Activated T-helper 2 cell treated with anti-CD3 and anti-CD28 coated beads, Interferon-gamma antibody, Interleukin-2, Interleukin-4, amounts not matched to agents 10 μg/mL and 5 μg/mL and 100 μg/mL, durations not matched to agents 14 hours and 24 hours and 36 hours (primary cell): ENCODE measurements at regions of chr12 and their contacts with region 1.

Region 1: DNA sequence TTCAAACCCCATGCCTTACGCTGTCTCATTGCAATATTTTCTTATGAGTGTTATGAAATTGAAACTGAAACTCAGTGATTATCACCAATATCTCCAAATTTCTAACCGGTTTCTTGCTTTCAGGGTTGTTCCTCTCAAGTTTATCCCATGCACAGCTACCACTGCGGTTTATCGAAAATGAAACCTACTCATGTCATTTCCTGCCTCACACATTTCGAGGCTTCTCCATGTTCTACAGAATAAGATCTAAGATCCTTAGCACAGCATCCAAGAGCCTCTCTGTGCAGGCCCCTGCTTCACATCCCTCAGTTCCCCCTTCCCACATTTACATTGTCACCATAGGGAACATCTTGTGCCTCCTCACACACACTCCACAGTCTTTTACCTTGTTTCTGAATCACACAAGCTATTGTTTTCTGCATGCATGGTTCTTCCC is 45.5 kb upstream of the FAR2 start:
- DNase-seq: peak; percentile 65
- H3K4me3 Mint-ChIP-seq: peak overlapping the region; percentile 7
- H3K27ac Mint-ChIP-seq: peak overlapping the region; percentile 60
- H3K4me1 Mint-ChIP-seq: peaks cover 29% of the 10 kb centered on the region
- H3K27me3 Mint-ChIP-seq: peaks cover 10% of the 10 kb centered on the region

Region 2: GRCh38 chr12:28535216-28535615 is 568.3 kb before region 1 on chr12:
- intact Hi-C with region 1: loop called (anchors 5 kb)
- DNase-seq: no peak
- H3K4me3 Mint-ChIP-seq: no peak overlapping the region
- H3K27ac Mint-ChIP-seq: no peak overlapping the region
- H3K4me1 Mint-ChIP-seq: peaks cover 10% of the 10 kb centered on the region
- H3K27me3 Mint-ChIP-seq: no peaks in the 10 kb centered on the region

Region 3: GRCh38 chr12:29082522-29082921 is 21.0 kb before region 1 on chr12:
- intact Hi-C with region 1: loop called (anchors 1 kb)
- DNase-seq: no peak
- H3K4me3 Mint-ChIP-seq: no peak overlapping the region
- H3K27ac Mint-ChIP-seq: no peak overlapping the region
- H3K4me1 Mint-ChIP-seq: peaks cover 5% of the 10 kb centered on the region
- H3K27me3 Mint-ChIP-seq: peaks cover 44% of the 10 kb centered on the region

Region 4: DNA sequence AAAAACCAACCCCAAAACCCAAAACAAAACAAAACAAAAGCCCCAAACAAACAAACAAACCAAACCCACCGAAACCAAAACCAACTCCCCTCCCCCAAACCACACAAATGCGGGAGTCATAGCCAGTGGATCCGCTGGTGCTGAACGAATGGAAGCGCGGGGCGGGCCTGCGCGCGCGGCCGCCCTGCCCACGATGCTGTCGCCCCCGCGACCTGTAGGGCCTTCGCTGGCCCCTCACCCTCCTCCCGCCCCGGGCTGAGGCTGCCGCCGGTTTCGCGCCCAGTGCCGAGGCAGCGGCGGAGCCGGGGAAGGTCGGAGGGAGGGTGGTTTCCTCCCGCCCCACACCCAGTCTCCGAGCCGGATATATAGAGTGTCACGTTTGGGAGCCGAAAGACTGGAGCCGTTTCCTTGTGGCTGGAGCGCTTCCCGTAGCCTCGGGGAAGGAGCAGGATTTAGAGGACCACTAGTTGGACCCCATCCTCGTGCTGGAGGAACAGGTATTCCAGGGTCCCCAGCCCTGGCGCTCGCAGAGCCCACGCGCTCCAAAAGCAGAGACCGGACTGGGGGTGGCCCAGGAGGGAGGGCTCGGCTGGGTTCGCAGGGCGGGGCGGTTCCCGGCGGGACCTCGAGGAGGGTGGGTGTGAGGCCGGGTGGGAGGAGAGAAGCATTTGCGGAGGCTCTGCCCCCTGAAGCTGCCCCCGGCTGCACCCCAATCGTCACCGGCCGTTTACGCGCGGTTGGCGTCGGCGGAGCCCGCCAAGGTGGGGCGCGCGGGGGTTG is 45.5 kb after region 1 on chr12 and contains the start of gene FAR2:
- intact Hi-C with region 1: loop called (anchors 1 kb)
- DNase-seq: peak; percentile 33
- H3K4me3 Mint-ChIP-seq: peak within 1 kb of the TSS; percentile 83
- H3K27ac Mint-ChIP-seq: peak within 1 kb of the TSS; percentile 64
- H3K4me1 Mint-ChIP-seq: peaks cover 20% of the 10 kb centered on the region
- H3K27me3 Mint-ChIP-seq: peaks cover 68% of the 10 kb centered on the region
- total RNA-seq, gene FAR2: 3.8 and 4.3 TPM in 2 replicates

Region 5: GRCh38 chr12:29241821-29242591 is 138.4 kb after region 1 on chr12:
- intact Hi-C with region 1: loop called (anchors 5 kb)
- DNase-seq: no peak
- H3K4me3 Mint-ChIP-seq: no peak overlapping the region
- H3K27ac Mint-ChIP-seq: no peak overlapping the region
- H3K4me1 Mint-ChIP-seq: peaks cover 19% of the 10 kb centered on the region
- H3K27me3 Mint-ChIP-seq: peaks cover 2% of the 10 kb centered on the region

Region 6: DNA sequence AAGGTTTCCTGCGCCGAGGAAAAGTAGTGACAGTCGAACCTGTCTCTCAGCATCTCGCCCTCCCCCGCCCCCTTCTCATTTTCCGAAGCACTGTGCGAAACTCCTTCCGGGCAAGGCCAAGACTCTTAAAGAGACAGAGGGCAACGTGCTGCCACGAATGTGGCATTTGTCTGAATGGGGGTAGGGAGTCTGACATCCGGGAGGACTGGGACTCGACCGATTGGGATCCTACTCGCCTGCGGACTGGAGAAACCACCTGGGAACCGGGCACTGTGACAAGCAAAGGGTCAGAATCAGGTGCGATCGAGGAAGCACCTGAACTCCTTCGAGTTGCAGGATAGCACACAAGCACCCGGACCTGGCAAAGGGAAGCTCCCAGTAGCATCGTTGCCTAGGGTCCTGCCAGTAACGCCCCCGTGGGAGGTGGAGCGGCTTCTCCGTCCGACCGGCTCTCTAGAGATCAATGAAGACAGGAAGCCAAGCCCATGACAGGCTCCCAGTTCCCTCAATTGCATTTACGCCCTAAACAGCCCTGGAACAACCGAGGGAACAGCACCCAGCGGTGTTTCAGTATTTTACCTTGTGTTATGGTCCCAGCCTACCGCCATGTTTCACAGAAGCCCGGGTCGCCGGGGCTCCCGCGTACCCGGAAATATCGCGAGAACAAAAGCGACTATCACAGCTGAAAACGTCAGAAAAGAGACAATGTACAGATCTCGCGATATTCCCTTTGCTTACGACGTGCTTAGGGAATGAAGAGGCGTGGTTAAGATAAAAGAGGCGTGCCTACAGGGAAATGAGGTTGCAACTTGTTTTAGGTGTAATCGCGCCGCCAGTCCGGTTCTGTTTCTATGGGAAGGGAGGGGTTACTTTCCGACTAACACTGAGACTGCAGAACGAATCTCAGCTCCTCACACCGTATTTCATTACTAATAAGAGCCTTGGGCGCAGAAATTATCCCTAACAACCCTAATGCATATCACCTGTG is 277.3 kb after region 1 on chr12 and contains the start of gene ERGIC2:
- intact Hi-C with region 1: loop called (anchors 2 kb)
- DNase-seq: peak; percentile 88
- H3K4me3 Mint-ChIP-seq: peak within 1 kb of the TSS; percentile 91
- H3K27ac Mint-ChIP-seq: peak within 1 kb of the TSS; percentile 92
- H3K4me1 Mint-ChIP-seq: peaks cover 33% of the 10 kb centered on the region
- H3K27me3 Mint-ChIP-seq: peaks cover 2% of the 10 kb centered on the region
- total RNA-seq, gene ERGIC2: 88.7 and 91.5 TPM in 2 replicates

Region 7: GRCh38 chr12:29662734-29663323 is 559.3 kb after region 1 on chr12:
- intact Hi-C with region 1: no loop called
- DNase-seq: no peak
- H3K4me3 Mint-ChIP-seq: no peak overlapping the region
- H3K27ac Mint-ChIP-seq: no peak overlapping the region
- H3K4me1 Mint-ChIP-seq: no peaks in the 10 kb centered on the region
- H3K27me3 Mint-ChIP-seq: no peaks in the 10 kb centered on the region

Region 8: DNA sequence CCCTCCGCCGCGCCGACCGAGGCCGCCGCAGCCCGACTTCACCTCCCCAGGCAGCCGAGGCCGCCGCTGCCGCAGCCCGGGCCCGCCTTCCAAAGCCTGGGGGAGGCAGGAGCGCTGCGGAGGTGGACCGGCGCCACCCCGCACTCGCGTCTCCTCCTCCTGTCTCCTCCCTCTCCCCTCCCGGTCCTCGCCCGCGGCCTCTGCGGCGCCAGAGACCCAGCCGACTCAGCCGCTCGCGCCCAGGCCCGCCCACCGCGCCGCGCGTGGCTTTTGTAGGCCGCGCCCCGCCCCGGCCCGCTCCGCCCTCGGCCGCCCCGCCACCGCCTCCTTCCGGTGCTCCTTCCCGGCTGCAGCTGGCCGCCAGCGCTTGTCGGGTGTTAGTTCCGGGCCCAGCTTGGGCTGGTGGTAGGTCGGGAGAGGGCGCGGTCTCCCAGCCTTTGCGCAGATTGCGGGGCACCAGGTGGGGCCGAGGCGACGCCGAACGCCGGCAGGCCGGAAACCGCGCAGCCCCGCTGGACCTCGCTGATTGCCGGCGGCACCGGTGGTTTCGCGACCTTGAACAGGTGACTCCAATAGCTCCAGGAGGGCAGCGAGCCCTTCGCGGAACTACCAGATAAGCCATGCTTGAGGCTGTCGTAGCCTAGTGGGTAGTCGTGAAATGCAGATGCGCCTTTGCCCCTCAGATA is 1651.3 kb after region 1 on chr12 and contains the start of gene CAPRIN2:
- intact Hi-C with region 1: loop called (anchors 10 kb)
- DNase-seq: peak; percentile 92
- H3K4me3 Mint-ChIP-seq: peak within 1 kb of the TSS; percentile 88
- H3K27ac Mint-ChIP-seq: peak within 1 kb of the TSS; percentile 18
- H3K4me1 Mint-ChIP-seq: peaks cover 33% of the 10 kb centered on the region
- H3K27me3 Mint-ChIP-seq: no peaks in the 10 kb centered on the region
- total RNA-seq, gene CAPRIN2: 13.5 and 14.2 TPM in 2 replicates